Activated B cell treated with CpG ODN at 0.5 μM for 24 hours (primary cell): ENCODE measurements at regions of chr2 and their contacts with region 1.

Region 1: DNA sequence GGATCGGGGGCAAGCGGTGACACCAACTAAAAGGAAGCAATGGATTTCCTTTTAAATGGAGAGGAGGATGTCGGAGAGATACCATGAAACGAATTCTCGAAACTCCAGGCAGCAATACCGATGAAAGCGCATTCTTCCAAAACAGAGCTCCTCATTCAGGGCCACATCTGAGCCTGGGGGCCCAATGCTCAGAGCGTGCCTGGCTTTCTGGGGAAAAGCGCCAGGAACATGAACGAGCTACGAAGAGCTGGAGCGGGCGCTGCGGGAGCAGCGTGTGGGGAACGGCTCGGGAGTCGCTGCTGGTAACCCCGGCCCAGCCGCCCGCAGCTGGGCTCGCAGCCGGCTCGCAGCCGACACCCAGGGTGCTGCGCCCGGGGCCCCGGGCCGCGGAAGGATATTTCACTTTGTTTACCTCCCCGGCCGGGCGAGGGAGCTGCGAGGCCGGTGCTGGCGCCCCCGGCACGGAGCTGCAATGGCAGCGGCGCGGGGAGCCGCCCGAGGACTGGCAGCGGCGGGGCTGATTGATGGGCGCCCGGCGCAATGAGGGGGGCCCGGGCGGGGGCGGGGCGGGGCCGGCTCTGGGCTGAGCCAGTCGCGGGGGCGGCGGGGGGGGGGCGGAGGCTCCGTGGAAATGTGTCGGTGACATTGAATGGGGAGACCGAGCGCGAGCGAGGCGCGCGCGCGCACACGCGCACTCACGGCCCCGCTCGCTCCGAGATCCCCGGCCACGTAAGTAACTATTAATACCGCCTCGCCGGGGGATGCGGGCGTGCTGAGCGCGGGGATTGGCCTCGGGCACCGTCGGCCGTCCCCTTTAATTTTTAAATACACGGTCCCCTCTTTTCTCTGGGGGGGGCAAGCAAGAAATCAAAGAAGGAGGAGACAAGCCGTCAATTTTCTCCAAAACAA is at the start of gene TRIB2:
- DNase-seq: peak; percentile 79
- ATAC-seq: peak; percentile 84
- H3K4me3 Mint-ChIP-seq: peak within 1 kb of the TSS; percentile 97
- H3K27ac Mint-ChIP-seq: peak within 1 kb of the TSS; percentile 91
- H3K4me1 Mint-ChIP-seq: peaks cover 42% of the 10 kb centered on the region
- H3K27me3 Mint-ChIP-seq: no peaks in the 10 kb centered on the region
- CTCF ChIP-seq: no peak
- total RNA-seq, gene TRIB2: 17.7 and 19.3 TPM in 2 replicates

Region 2: GRCh38 chr2:11154923-11155380 is 1561.6 kb before region 1 on chr2:
- CTCF ChIA-PET with region 1: no interaction called
- POLR2A ChIA-PET with region 1: no interaction called
- intact Hi-C with region 1: loop called (anchors 10 kb)
- DNase-seq: peak; percentile 91
- ATAC-seq: peak; percentile 92
- H3K4me3 Mint-ChIP-seq: peak overlapping the region; percentile 85
- H3K27ac Mint-ChIP-seq: peak overlapping the region; percentile 84
- H3K4me1 Mint-ChIP-seq: peaks cover 20% of the 10 kb centered on the region
- H3K27me3 Mint-ChIP-seq: no peaks in the 10 kb centered on the region
- CTCF ChIP-seq: no peak

Region 3: DNA sequence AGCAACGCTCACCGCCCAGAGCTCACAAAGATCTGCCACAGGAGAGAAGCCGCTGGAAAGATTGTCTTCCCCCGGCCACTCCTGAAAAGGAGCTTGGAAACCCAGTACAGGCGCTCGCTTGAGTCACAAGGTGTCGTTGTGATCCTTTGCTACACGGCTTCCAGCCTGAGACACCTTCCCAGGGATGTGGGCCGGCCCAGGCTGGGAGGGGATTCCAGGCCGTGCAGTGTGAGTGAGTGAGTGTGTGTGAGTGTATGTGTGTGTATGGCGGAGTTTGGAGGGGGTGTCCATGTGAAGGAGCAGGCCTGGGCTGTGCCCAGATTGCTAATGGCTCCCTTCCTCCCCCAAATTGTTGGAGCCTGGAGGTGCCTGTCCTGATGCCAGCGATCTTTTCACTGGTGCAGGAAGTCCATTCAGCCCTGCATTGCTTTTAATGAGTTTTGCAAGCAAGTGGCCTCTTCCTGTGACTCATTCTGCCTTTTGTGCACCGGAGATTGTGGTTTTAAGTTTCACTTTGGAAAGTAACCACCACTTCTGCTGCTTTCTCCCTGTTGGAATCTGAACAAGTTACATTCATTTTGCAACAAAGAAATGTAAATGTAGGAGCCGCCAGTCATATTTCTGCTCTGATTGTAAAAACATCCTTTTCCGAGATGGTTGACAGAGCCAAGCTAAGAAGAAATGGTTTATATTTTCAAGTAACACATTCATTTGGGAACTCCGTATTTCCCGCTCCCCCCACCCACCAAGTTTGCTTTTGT is 886.4 kb before region 1 on chr2:
- CTCF ChIA-PET with region 1: interaction called, 50 read pairs
- POLR2A ChIA-PET with region 1: interaction called, 24 read pairs
- intact Hi-C with region 1: loop called (anchors 1 kb)
- DNase-seq: peak; percentile 40
- ATAC-seq: peak; percentile 66
- H3K4me3 Mint-ChIP-seq: peak overlapping the region; percentile 75
- H3K27ac Mint-ChIP-seq: peak overlapping the region; percentile 75
- H3K4me1 Mint-ChIP-seq: peaks cover 64% of the 10 kb centered on the region
- H3K27me3 Mint-ChIP-seq: no peaks in the 10 kb centered on the region
- CTCF ChIP-seq: no peak

Region 4: DNA sequence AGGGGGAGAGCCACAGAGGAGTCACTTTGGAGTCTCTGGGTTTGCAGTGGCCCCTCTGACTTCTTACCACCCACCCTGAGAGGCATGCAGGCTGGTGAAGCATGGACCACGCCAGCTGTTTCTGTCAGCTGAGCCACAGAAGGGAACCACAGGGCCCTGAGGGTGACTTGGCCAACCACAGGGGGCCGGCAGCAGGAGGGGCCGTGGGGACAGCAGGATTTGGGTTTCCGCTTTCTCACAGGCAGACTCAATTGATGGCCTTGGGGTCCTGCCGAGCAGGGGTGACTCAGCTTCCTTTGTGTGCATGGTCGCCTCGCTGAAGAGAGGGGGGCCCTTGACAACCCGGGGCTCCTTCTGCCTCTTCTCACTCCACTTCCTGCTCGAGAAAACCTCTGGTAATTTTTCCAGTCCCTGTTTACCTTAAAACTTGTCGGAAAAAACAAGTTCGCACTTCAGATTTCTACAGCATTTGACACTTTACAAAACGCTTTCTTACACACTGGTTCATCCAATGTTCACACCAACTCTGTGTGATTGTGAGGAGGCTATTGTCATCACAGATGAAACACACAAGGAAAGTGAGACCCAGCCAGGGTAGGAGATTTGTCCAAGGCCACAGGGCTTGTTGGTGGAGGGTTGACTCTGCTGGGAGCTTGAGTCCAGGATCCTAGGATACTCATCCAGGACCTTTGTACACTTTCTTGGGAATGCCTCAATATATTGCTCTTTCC is 658.9 kb before region 1 on chr2:
- CTCF ChIA-PET with region 1: no interaction called
- POLR2A ChIA-PET with region 1: interaction called, 14 read pairs
- intact Hi-C with region 1: no loop called
- DNase-seq: peak; percentile 57
- ATAC-seq: peak; percentile 88
- H3K4me3 Mint-ChIP-seq: peak overlapping the region; percentile 47
- H3K27ac Mint-ChIP-seq: peak overlapping the region; percentile 50
- H3K4me1 Mint-ChIP-seq: peaks cover 67% of the 10 kb centered on the region
- H3K27me3 Mint-ChIP-seq: no peaks in the 10 kb centered on the region
- CTCF ChIP-seq: no peak

Region 5: GRCh38 chr2:12320991-12321641 is 395.4 kb before region 1 on chr2:
- CTCF ChIA-PET with region 1: interaction called, 8 read pairs
- POLR2A ChIA-PET with region 1: no interaction called
- intact Hi-C with region 1: loop called (anchors 10 kb)
- DNase-seq: no peak
- ATAC-seq: no peak
- H3K4me3 Mint-ChIP-seq: no peak overlapping the region
- H3K27ac Mint-ChIP-seq: no peak overlapping the region
- H3K4me1 Mint-ChIP-seq: peaks cover 37% of the 10 kb centered on the region
- H3K27me3 Mint-ChIP-seq: no peaks in the 10 kb centered on the region
- CTCF ChIP-seq: no peak

Region 6: DNA sequence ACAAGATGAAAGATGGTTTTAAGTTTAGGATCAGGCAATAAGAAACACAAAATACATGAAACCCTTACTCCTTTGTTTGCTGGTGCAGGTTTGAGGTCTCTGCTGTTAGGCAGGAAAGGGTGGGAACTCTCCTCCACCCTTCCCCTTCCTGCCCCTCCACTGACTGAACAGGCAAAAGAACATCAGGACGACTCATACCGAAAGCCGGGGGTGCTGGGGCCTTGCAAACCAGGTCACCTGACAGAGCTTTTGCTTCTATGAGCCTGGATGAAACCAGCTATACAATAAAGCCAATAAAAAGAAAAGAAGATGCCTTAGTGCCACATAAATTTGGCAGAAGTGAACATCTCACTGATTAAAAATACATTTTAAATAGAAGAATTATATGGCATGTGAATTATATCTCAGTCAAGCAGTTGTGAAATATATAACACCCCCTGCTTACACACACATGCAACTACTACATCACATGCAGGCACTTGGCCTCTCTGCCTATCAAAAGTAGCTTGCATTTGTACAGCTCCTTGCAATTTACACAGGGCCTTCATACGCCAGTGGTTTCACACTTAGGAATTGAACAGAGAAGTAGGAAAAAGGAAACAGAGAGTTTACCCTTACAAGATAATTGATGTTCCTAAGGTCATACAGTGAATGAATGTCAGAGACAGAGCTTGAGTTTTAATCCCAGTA is 214.9 kb before region 1 on chr2:
- CTCF ChIA-PET with region 1: interaction called, 8 read pairs
- POLR2A ChIA-PET with region 1: interaction called, 4 read pairs
- intact Hi-C with region 1: loop called (anchors 5 kb)
- DNase-seq: peak; percentile 33
- ATAC-seq: peak; percentile 90
- H3K4me3 Mint-ChIP-seq: peak overlapping the region; percentile 67
- H3K27ac Mint-ChIP-seq: peak overlapping the region; percentile 75
- H3K4me1 Mint-ChIP-seq: peaks cover 72% of the 10 kb centered on the region
- H3K27me3 Mint-ChIP-seq: peaks cover 6% of the 10 kb centered on the region
- CTCF ChIP-seq: no peak

Region 7: GRCh38 chr2:12931186-12931844 is 214.8 kb after region 1 on chr2:
- CTCF ChIA-PET with region 1: interaction called, 64 read pairs
- POLR2A ChIA-PET with region 1: interaction called, 3 read pairs
- intact Hi-C with region 1: loop called (anchors 1 kb)
- DNase-seq: no peak
- ATAC-seq: peak; percentile 49
- H3K4me3 Mint-ChIP-seq: no peak overlapping the region
- H3K27ac Mint-ChIP-seq: no peak overlapping the region
- H3K4me1 Mint-ChIP-seq: peaks cover 15% of the 10 kb centered on the region
- H3K27me3 Mint-ChIP-seq: no peaks in the 10 kb centered on the region
- CTCF ChIP-seq: no peak